A673 (cell line): ENCODE measurements at regions of chr18 and their contacts with region 1.

Region 1: GRCh38 chr18:63378919-63379638 is 12.1 kb upstream of the KDSR start:
- DNase-seq: no peak
- H3K4me3 ChIP-seq: no peak overlapping the region
- H3K27ac ChIP-seq: peak overlapping the region; percentile 95
- H3K4me1 ChIP-seq: peaks cover 31% of the 10 kb centered on the region
- H3K27me3 ChIP-seq: no peaks in the 10 kb centered on the region
- CTCF ChIP-seq: no peak

Region 2: DNA sequence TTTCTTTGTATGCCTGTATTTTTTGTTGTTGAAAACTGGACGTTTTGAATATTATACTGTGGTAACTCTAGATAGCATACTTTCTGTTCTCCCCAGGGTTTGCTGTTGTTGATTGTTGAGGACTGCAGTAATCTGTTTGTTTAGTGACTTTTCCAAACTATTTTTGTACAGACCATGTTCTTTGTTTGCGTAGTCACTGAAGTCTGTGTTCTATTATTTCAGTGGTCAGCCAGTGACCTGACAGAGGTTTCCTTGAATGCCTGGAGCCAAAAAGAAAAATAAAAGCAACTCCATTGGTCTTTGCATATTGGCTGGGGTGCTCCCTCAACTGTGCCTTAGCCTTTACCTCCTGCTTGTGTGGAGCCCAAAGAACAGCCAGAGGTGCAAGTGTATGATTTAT is 706.5 kb before region 1 on chr18:
- CTCF ChIA-PET with region 1: no interaction called
- POLR2A ChIA-PET with region 1: no interaction called
- intact Hi-C with region 1: loop called (anchors 2 kb)
- DNase-seq: no peak
- H3K4me3 ChIP-seq: no peak overlapping the region
- H3K27ac ChIP-seq: no peak overlapping the region
- H3K4me1 ChIP-seq: peaks cover 18% of the 10 kb centered on the region
- H3K27me3 ChIP-seq: no peaks in the 10 kb centered on the region
- CTCF ChIP-seq: no peak

Region 3: GRCh38 chr18:62702253-62702652 is 676.8 kb before region 1 on chr18:
- CTCF ChIA-PET with region 1: no interaction called
- POLR2A ChIA-PET with region 1: no interaction called
- intact Hi-C with region 1: no loop called
- DNase-seq: no peak
- H3K4me3 ChIP-seq: no peak overlapping the region
- H3K27ac ChIP-seq: no peak overlapping the region
- H3K4me1 ChIP-seq: no peaks in the 10 kb centered on the region
- H3K27me3 ChIP-seq: no peaks in the 10 kb centered on the region
- CTCF ChIP-seq: no peak

Region 4: DNA sequence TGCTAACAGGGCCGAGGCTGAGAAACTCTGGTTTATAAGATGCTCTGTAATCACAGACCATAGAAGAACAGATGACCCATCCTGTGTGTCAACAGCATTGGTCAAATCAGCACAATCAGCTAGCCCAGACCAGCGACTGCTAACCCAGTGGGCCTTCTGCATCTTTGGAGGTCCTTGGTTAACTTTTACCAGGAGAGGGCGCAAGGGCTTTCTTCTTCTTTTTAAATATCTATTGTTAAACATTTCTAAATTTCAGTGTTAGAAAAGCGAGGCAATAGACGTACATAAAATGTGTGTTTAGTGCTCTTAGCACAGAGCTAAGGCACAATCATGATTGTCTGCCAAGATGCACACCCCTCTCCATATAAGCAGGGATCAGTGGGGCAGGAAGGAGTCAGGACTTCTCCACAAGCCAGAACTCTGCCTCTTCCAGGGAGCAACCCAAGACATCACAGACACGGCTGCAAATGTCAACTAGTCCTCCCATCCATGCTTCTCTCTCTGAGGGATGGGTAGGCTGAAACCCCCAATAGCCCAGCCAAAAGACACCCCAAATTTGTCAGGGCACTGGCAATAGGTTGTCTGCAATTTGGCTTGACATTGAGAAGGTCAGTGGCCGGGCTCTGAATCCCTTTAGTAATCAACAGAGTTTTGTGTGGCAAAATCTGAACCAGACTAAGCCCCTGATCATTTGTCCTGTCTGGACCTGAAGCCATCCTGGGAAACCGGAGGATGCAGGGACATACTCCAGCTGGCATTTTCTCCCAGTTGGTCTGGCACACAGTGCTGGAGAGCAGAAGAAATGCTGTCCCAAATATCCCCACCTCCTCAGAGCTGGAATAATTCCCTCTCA is 247.7 kb before region 1 on chr18:
- CTCF ChIA-PET with region 1: no interaction called
- POLR2A ChIA-PET with region 1: no interaction called
- intact Hi-C with region 1: loop called (anchors 1 kb)
- DNase-seq: peak; percentile 61
- H3K4me3 ChIP-seq: no peak overlapping the region
- H3K27ac ChIP-seq: no peak overlapping the region
- H3K4me1 ChIP-seq: peaks cover 34% of the 10 kb centered on the region
- H3K27me3 ChIP-seq: no peaks in the 10 kb centered on the region
- CTCF ChIP-seq: peak; percentile 73

Region 5: DNA sequence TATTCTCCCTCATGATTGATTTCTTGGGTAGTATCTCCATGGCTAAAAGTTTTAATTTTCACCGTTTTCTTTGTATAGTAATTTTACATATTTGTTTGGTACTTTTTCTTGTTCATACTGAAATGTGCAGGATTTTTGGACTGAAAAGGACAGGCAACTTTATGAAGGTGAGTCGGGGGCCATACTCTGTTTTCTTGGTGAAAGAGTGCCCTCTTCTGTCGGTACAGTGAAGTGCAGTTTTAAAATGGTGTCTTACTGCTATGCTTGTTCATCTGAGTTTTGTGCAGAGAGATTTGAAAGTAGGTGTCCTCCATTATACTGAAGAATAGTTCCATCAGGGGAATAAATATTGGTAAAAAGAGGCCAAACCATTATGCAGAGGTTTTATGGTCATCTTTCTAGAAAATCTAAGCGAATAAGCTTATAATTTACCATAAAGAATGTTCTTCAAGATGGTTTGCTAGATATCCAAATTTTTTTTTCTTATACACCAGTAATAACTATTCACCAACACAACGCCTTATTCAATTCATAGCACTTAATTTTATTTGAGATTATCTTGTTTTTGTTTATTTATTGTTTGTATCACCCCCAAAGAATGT is 199.4 kb after region 1 on chr18:
- CTCF ChIA-PET with region 1: no interaction called
- POLR2A ChIA-PET with region 1: no interaction called
- intact Hi-C with region 1: loop called (anchors 5 kb)
- DNase-seq: peak; percentile 79
- H3K4me3 ChIP-seq: no peak overlapping the region
- H3K27ac ChIP-seq: no peak overlapping the region
- H3K4me1 ChIP-seq: peaks cover 25% of the 10 kb centered on the region
- H3K27me3 ChIP-seq: no peaks in the 10 kb centered on the region
- CTCF ChIP-seq: peak; percentile 89

Region 6: GRCh38 chr18:63590373-63590772 is 211.3 kb after region 1 on chr18:
- CTCF ChIA-PET with region 1: interaction called, 4 read pairs
- POLR2A ChIA-PET with region 1: interaction called, 24 read pairs
- intact Hi-C with region 1: loop called (anchors 1 kb)
- DNase-seq: peak; percentile 58
- H3K4me3 ChIP-seq: no peak overlapping the region
- H3K27ac ChIP-seq: peak overlapping the region; percentile 75
- H3K4me1 ChIP-seq: peaks cover 37% of the 10 kb centered on the region
- H3K27me3 ChIP-seq: no peaks in the 10 kb centered on the region
- CTCF ChIP-seq: no peak

Region 7: GRCh38 chr18:63753676-63754075 is 374.6 kb after region 1 on chr18:
- CTCF ChIA-PET with region 1: no interaction called
- POLR2A ChIA-PET with region 1: no interaction called
- intact Hi-C with region 1: loop called (anchors 5 kb)
- DNase-seq: no peak
- H3K4me3 ChIP-seq: no peak overlapping the region
- H3K27ac ChIP-seq: no peak overlapping the region
- H3K4me1 ChIP-seq: peaks cover 6% of the 10 kb centered on the region
- H3K27me3 ChIP-seq: no peaks in the 10 kb centered on the region
- CTCF ChIP-seq: no peak

Region 8: GRCh38 chr18:64276311-64277090 is 897.4 kb after region 1 on chr18:
- CTCF ChIA-PET with region 1: no interaction called
- POLR2A ChIA-PET with region 1: no interaction called
- intact Hi-C with region 1: loop called (anchors 5 kb)
- DNase-seq: peak; percentile 98
- H3K4me3 ChIP-seq: no peak overlapping the region
- H3K27ac ChIP-seq: peak overlapping the region; percentile 95
- H3K4me1 ChIP-seq: peaks cover 22% of the 10 kb centered on the region
- H3K27me3 ChIP-seq: no peaks in the 10 kb centered on the region
- CTCF ChIP-seq: no peak